ENCODE measurements at regions of chr6 and their contacts with region 1.

Region 1: GRCh38 chr6:49342410-49342809 is 120.6 kb downstream of the MMUT start:
- DNase-seq: no peak
- ATAC-seq: no peak
- H3K4me3 ChIP-seq: no peak overlapping the region
- H3K27ac ChIP-seq: no peak overlapping the region
- H3K4me1 ChIP-seq: no peaks in the 10 kb centered on the region
- H3K27me3 ChIP-seq: no peaks in the 10 kb centered on the region
- CTCF ChIP-seq: no peak

Region 2: DNA sequence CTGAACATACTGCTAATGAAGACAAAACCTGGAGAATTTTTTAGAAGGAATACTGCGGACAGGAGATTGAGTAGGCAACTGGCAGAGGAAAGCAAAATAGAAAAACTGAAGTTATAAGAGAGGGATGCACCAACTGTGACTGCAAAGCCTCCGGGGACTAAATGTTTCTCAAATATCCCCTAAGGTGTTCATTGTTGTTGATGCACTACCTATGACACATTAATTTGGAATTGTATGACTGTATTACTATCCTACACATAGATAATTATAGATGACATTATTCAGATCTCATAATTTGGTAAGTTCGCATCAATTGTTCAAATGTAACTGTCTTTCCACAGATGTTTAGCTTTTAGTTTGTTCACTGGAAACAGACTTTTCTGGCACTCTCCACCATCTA is 220.4 kb before region 1 on chr6:
- CTCF ChIA-PET with region 1: no interaction called
- POLR2A ChIA-PET with region 1: no interaction called
- in situ Hi-C with region 1: no loop called
- intact Hi-C with region 1: no loop called
- DNase-seq: no peak
- ATAC-seq: no peak
- H3K4me3 ChIP-seq: no peak overlapping the region
- H3K27ac ChIP-seq: no peak overlapping the region
- H3K4me1 ChIP-seq: no peaks in the 10 kb centered on the region
- H3K27me3 ChIP-seq: no peaks in the 10 kb centered on the region
- CTCF ChIP-seq: no peak

Region 3: DNA sequence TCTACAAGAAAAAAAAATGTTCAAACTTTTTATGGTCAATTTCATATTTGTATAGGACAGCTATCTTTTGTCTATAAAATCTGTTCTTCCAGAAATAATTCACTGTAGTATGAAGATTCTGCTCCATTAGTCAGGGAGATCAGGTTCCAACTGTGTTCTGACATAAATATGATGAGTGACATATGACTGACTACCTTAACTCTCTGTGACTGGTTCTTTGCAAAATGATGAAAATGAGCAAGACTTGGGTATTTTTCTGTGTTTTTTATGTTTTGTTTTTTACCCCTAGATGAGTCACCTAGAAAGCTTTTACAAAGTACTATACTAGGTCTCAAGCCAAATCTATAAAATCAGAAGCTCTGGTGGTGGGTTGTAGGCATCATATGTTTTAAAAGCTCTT is 108.9 kb before region 1 on chr6:
- CTCF ChIA-PET with region 1: no interaction called
- POLR2A ChIA-PET with region 1: no interaction called
- in situ Hi-C with region 1: no loop called
- intact Hi-C with region 1: no loop called
- DNase-seq: no peak
- ATAC-seq: no peak
- H3K4me3 ChIP-seq: no peak overlapping the region
- H3K27ac ChIP-seq: no peak overlapping the region
- H3K4me1 ChIP-seq: no peaks in the 10 kb centered on the region
- H3K27me3 ChIP-seq: no peaks in the 10 kb centered on the region
- CTCF ChIP-seq: no peak

Region 4: DNA sequence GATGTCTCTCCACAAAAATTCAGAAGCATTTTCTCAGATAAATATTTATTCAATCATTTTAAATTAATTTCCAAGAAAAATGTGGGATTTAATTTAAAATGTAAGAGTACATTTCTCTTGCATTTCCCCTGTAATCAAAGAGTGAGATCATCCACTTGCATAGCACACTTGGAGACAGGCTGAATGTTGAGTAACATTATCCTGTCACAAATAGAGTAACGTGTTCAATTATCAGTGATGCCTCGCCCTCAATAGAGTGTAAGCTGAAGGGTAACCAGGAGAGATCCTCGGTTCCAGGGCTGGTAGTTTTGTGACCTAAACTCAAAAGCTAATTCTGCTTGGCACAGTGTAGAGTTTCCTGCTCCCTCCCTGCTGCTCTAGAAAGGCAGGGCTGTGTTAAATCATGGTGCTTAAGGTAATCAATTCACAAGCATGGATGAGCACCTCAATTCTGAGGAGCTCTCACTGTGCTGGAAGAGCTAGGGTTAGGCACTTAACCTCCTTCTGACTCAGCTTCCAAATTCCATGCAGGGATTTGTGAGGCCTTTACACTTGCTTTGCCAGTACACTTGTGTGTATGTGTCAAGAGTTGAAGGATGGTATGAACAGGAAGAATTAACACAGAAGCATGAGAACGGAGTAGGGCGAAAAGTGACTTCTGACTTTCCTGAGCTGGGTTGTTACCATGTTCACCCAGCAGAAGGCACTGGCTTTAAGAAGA is 64.0 kb after region 1 on chr6:
- CTCF ChIA-PET with region 1: no interaction called
- POLR2A ChIA-PET with region 1: no interaction called
- in situ Hi-C with region 1: no loop called
- intact Hi-C with region 1: no loop called
- DNase-seq: no peak
- ATAC-seq: no peak
- H3K4me3 ChIP-seq: no peak overlapping the region
- H3K27ac ChIP-seq: no peak overlapping the region
- H3K4me1 ChIP-seq: no peaks in the 10 kb centered on the region
- H3K27me3 ChIP-seq: no peaks in the 10 kb centered on the region
- CTCF ChIP-seq: no peak

Region 5: GRCh38 chr6:49570474-49571079 is 228.2 kb after region 1 on chr6:
- CTCF ChIA-PET with region 1: no interaction called
- POLR2A ChIA-PET with region 1: no interaction called
- in situ Hi-C with region 1: no loop called
- intact Hi-C with region 1: no loop called
- DNase-seq: no peak
- ATAC-seq: no peak
- H3K4me3 ChIP-seq: no peak overlapping the region
- H3K27ac ChIP-seq: no peak overlapping the region
- H3K4me1 ChIP-seq: no peaks in the 10 kb centered on the region
- H3K27me3 ChIP-seq: no peaks in the 10 kb centered on the region
- CTCF ChIP-seq: peak; percentile 21; the same call in 1 of the 2 replicates

Region 6: GRCh38 chr6:49939993-49940498 is 597.6 kb after region 1 on chr6:
- CTCF ChIA-PET with region 1: no interaction called
- POLR2A ChIA-PET with region 1: interaction called, 19 read pairs
- in situ Hi-C with region 1: no loop called
- intact Hi-C with region 1: no loop called
- DNase-seq: no peak
- ATAC-seq: no peak
- H3K4me3 ChIP-seq: no peak overlapping the region
- H3K27ac ChIP-seq: no peak overlapping the region
- H3K4me1 ChIP-seq: no peaks in the 10 kb centered on the region
- H3K27me3 ChIP-seq: no peaks in the 10 kb centered on the region
- CTCF ChIP-seq: no peak

Measured in Panc1 (cell line).